Lower leg skin (tissue), 4 donors: ENCODE measurements at regions of chrX and their contacts with region 1.

Region 1: GRCh38 chrX:107763647-107764046 is 11.9 kb downstream of the TSC22D3 start:
- DNase-seq: no peak
- H3K4me3 ChIP-seq: no peak overlapping the region
- CTCF ChIP-seq: no peak
- POLR2A ChIP-seq: no peak

Region 2: DNA sequence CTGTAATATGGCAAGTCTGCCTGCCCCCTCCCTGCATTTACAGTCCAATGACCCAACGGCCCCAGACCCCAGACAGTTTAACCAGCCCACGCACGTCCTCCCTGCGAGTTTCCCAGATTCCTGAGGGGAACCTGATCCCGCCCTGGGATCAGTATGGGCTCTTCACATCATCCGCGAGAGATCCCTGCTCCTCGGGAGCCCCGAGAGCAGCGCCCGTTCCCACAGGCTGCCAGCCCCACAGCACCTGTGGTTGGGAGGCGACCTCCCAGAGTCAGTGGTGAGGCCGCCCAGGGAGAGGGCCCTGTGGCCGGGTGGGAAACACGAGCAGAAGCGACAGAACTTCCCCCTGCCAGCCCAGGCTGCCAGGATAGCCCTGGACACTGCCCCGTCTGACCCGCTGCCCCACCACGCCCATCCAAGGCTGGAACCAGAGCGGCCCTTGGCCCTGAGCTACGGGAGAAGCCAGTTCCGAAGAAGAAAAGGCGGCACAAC is 20.9 kb before region 1 on chrX:
- intact Hi-C with region 1: loop called (anchors 1 kb)
- DNase-seq: no peak
- H3K4me3 ChIP-seq: no peak overlapping the region
- CTCF ChIP-seq: no peak
- POLR2A ChIP-seq: no peak